Ascending aorta (tissue), 2 donors: ENCODE measurements at regions of chr19 and their contacts with region 1.

Region 1: GRCh38 chr19:41353466-41354342 is at the start of gene TGFB1:
- DNase-seq: peak; percentile 62 to 95
- H3K4me3 ChIP-seq: peak within 1 kb of the TSS; percentile 66 to 90
- H3K27ac ChIP-seq: peak within 1 kb of the TSS; percentile 88 to 93
- H3K4me1 ChIP-seq: peaks cover 0 to 6% of the 10 kb centered on the region in 2 donors
- H3K27me3 ChIP-seq: no peaks in the 10 kb centered on the region
- CTCF ChIP-seq: peak; percentile 84 to 95 (median 93)
- total RNA-seq, gene TGFB1: 103 TPM

Region 2: GRCh38 chr19:41218615-41219507 is 134.8 kb before region 1 on chr19 and contains the start of gene AXL:
- intact Hi-C with region 1: loop called (anchors 5 kb)
- DNase-seq: peak; percentile 66 to 92
- H3K4me3 ChIP-seq: peak within 1 kb of the TSS; percentile 66 to 68
- H3K27ac ChIP-seq: peak within 1 kb of the TSS; percentile 92 to 95
- H3K4me1 ChIP-seq: peaks cover 0 to 21% of the 10 kb centered on the region in 2 donors
- H3K27me3 ChIP-seq: no peaks in the 10 kb centered on the region
- CTCF ChIP-seq: peak in 1 of 3 experiments; percentile 6
- total RNA-seq, gene AXL: 122 TPM

Region 3: DNA sequence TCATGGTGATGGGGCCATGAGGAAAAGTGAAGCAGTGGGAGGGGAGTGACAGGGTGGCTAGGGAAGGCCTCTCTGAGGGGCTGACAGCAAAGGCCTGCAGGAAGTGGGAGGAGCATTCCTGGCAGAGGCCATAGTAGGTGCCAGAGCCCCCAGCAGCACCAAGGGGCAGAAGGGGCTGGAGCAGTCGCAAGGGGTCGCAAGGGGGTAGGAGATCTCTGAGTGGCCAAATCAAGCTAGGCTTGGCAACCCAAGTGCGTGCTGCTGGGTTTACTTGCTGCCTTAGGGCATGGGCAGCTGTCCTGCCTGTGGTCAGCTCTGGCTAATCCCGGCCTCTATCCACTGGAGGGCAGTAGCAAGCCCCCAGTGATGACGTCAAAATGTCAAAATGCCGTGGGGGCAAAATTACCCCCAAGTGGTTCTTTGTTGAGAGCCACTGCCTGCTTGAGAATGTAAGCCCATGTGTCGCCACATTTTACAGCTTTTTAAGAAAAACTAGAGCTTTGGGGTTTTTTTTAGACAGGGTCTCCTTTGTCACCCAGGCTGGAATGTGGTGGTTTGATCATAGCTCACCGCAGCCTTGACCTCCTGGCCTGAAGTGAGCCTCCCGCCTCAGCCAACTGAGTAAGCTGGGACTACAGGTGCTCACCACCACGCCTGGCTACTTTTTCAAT is 32.0 kb before region 1 on chr19:
- intact Hi-C with region 1: loop called (anchors 1 kb)
- DNase-seq: no peak
- H3K4me3 ChIP-seq: no peak overlapping the region
- H3K27ac ChIP-seq: peak overlapping the region; percentile 85 to 97
- H3K4me1 ChIP-seq: peaks cover 35 to 52% of the 10 kb centered on the region in 2 donors
- H3K27me3 ChIP-seq: no peaks in the 10 kb centered on the region
- CTCF ChIP-seq: peak; percentile 61 to 70 (median 68)

Region 4: GRCh38 chr19:41363753-41364523 is 10.2 kb after region 1 on chr19 and contains the start of gene B9D2:
- intact Hi-C with region 1: loop called (anchors 1 kb)
- DNase-seq: peak; percentile 94 to 99
- H3K4me3 ChIP-seq: peak within 1 kb of the TSS; percentile 80
- H3K27ac ChIP-seq: peak within 1 kb of the TSS; percentile 97 to 98
- H3K4me1 ChIP-seq: peaks cover 0 to 11% of the 10 kb centered on the region in 2 donors
- H3K27me3 ChIP-seq: no peaks in the 10 kb centered on the region
- CTCF ChIP-seq: no peak
- total RNA-seq, gene B9D2: 17.5 TPM

Region 5: DNA sequence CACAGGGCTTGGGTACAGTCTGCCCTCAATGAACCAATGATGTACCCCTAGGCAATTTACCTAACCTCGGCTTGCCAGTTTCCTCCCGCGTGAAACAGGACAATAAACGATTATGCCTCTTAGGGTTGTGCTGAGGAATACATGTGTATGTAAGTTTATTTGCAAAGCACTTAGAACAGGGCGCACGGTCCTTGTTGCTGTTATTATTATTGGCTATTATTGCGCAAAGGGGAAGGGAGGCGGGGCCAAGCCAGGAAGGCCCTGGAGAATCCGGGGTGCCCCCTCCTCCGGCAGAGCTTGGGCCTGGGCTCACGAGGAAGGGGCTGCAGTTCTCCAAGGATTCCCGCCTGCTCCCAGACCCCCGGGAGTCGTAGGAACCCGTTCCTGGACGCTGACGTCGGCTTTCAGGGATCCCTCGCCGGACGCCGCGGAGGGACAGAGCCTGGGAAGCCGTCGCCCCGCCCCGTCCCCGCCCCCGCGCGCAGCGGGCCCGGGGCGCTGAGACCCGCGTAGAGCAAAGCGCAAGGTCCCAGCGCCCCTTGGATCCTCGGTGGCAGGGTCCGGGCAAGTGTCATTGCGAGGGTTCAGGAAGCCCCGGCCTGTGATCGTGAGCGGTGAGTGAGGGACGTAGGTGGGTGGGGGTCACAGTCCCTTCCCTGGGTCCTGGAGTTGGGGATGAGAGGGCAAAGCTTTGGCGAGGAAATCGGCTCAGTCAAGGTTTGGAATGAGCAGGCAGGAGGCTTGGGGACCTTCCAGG is 22.7 kb after region 1 on chr19 and contains the start of gene TMEM91:
- intact Hi-C with region 1: loop called (anchors 2 kb)
- DNase-seq: no peak
- H3K4me3 ChIP-seq: peak within 1 kb of the TSS; percentile 57 to 69
- H3K27ac ChIP-seq: peak within 1 kb of the TSS; percentile 71 to 75
- H3K4me1 ChIP-seq: peaks cover 0 to 14% of the 10 kb centered on the region in 2 donors
- H3K27me3 ChIP-seq: no peaks in the 10 kb centered on the region
- CTCF ChIP-seq: no peak
- total RNA-seq, gene TMEM91: 14.2 TPM

Region 6: DNA sequence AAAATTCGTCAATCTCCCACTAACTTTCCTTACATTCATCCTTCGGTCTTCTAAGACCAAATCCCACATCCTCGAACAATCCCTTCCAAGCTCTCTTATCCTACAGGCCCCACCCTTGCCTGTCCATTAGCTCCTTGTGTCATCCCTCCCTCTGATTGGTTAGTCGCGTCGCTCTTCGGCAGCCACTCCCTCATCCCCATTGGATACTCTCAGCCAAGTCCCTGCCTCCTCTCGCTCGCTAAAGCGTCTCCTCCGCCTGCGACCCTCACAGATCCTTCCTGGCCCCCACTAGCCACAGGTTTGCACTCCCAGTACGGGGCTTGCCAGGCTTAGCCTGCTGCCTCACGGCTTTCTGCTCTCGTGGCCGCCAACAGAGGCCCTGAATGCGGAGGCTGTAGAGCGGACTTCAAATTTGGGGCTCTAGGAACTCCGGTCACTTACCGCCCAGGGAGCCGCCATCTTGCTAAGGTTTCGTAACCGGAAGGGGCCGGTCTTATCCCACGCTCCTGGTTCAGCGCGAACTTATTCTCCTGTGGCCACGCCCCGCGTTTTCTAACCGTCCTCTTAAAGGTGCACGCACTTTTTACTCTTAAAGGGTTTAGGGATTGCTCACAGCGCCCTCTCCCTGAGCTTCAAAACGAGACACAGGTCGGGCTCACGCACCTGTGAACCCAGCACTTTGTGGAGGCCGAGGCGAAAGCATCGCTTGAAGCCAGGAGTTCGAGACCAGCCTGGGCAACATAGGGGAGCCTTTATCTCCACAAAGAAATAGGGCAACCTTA is 85.9 kb after region 1 on chr19 and contains the start of gene DMAC2:
- intact Hi-C with region 1: no loop called
- DNase-seq: peak; percentile 90 to 99
- H3K4me3 ChIP-seq: peak within 1 kb of the TSS; percentile 66 to 78
- H3K27ac ChIP-seq: peak within 1 kb of the TSS; percentile 90 to 92
- H3K4me1 ChIP-seq: no peaks in the 10 kb centered on the region
- H3K27me3 ChIP-seq: no peaks in the 10 kb centered on the region
- CTCF ChIP-seq: peak in 2 of 3 experiments; percentile 51 to 61
- total RNA-seq, gene DMAC2: 21.2 TPM